Ascending aorta (tissue), 2 donors: ENCODE measurements at regions of chr16 and their contacts with region 1.

Region 1: GRCh38 chr16:51818342-51818944 is 667.4 kb upstream of the SALL1 start:
- DNase-seq: no peak
- H3K4me3 ChIP-seq: no peak overlapping the region
- H3K27ac ChIP-seq: no peak overlapping the region
- H3K4me1 ChIP-seq: no peaks in the 10 kb centered on the region
- H3K27me3 ChIP-seq: no peaks in the 10 kb centered on the region
- CTCF ChIP-seq: peak in 2 of 3 experiments; percentile 10 to 26

Region 2: GRCh38 chr16:51989637-51990230 is 171.3 kb after region 1 on chr16:
- intact Hi-C with region 1: loop called (anchors 5 kb)
- DNase-seq: no peak
- H3K4me3 ChIP-seq: no peak overlapping the region
- H3K27ac ChIP-seq: no peak overlapping the region
- H3K4me1 ChIP-seq: no peaks in the 10 kb centered on the region
- H3K27me3 ChIP-seq: no peaks in the 10 kb centered on the region
- CTCF ChIP-seq: no peak

Region 3: GRCh38 chr16:52227851-52228250 is 409.4 kb after region 1 on chr16:
- intact Hi-C with region 1: no loop called
- DNase-seq: no peak
- H3K4me3 ChIP-seq: no peak overlapping the region
- H3K27ac ChIP-seq: no peak overlapping the region
- H3K4me1 ChIP-seq: no peaks in the 10 kb centered on the region
- H3K27me3 ChIP-seq: no peaks in the 10 kb centered on the region
- CTCF ChIP-seq: no peak